ENCODE measurements at regions of chr1 and their contacts with region 1.

Region 1: DNA sequence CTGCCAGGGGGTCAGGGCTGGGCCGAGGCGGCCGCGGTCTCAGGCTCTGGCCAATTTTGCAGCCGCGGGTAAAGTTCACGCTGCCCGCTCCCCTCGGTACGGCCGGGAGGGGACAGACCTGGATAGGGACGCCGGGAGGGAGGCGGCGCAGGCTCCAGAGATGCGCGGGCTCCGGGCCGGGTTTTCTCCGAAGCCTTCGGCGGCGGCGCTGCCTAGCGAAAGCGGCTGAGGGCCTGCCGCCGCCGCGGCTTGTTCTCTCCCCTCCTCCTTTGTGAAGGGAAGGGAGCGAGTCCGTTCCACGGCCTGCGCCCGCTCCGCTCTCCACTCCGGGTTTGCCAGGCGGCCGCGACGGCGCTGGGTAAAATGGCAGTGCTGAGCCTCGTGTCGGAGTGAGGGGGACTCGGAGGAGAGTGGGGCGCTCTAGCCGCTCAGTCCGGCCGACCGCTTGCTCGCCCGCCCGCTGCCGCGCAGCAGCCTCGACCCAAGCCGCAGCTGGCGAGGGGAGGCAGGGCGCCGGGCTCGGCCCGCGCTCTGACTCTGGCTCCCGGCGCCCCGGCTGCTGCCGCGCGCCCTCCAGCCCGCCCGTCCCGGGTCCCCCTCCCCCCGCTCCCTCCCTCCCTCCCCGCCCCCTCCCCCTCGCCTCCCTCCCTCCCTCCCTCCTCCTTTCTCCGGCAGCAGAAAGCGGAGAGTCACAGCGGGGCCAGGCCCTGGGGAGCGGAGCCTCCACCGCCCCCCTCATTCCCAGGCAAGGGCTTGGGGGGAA is at the start of gene ARID1A:
- DNase-seq: peak; percentile 97 to 99
- ATAC-seq: peak; percentile 91
- H3K4me3 ChIP-seq: peak within 1 kb of the TSS; percentile 95 to 100
- H3K27ac ChIP-seq: peak within 1 kb of the TSS; percentile 91 to 93
- H3K4me1 ChIP-seq: peaks cover 2 to 8% of the 10 kb centered on the region in 2 donors
- H3K27me3 ChIP-seq: no peaks in the 10 kb centered on the region
- total RNA-seq, gene ARID1A: 55.9 to 72.3 TPM

Region 2: DNA sequence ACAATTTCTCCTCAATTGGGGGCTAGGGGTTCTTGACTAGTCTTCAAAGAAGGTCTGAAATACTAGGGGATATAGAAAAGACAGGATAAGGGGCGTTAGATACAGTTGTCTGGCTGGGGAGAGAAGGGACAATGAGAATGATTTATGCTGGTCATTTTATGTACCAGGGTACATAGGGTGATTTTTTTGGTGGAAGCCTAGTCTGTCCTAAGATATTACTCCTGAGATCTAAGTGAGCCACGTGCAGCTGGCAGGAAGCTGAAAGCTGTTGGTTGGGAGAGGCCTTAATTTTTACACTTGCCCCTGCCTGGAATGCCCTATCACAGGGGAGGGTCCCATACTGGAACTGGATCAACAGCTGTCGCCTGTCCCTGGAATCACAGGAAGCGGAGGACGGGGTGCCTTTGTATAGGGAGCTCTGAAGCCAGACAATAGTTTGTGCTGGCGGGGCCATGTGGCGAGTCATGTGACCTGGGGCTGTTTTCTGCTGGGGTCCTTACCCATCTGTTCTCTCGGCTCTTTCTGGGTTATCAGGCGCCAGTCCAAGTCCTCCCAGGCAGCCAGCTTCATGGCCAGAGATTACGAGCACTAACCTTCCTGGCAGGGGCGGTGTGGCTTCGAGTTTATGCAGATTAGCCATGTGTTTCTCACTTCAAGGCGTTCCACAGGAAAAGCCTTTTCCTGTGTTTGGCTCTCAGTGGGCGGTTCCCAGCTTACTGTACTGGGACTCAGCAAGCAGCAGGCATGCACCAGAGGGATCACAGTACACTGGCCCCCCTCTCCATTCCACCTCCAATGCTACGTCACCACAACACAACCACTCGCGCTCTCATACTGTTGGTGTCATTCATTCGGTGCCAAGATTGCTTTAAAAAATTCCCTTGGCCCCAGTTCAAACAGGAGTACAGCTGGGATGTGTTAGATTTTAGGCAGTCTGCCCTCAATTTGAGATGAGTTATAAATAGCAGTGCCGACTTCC is 27.8 kb after region 1 on chr1:
- intact Hi-C with region 1: loop called in 1 of 2 experiments (anchors 2 kb)
- DNase-seq: peak; percentile 89
- ATAC-seq: peak; percentile 91
- H3K4me3 ChIP-seq: no peak overlapping the region
- H3K27ac ChIP-seq: peak overlapping the region; percentile 4 to 37
- H3K4me1 ChIP-seq: peaks cover 5 to 30% of the 10 kb centered on the region in 2 donors
- H3K27me3 ChIP-seq: no peaks in the 10 kb centered on the region

Region 3: DNA sequence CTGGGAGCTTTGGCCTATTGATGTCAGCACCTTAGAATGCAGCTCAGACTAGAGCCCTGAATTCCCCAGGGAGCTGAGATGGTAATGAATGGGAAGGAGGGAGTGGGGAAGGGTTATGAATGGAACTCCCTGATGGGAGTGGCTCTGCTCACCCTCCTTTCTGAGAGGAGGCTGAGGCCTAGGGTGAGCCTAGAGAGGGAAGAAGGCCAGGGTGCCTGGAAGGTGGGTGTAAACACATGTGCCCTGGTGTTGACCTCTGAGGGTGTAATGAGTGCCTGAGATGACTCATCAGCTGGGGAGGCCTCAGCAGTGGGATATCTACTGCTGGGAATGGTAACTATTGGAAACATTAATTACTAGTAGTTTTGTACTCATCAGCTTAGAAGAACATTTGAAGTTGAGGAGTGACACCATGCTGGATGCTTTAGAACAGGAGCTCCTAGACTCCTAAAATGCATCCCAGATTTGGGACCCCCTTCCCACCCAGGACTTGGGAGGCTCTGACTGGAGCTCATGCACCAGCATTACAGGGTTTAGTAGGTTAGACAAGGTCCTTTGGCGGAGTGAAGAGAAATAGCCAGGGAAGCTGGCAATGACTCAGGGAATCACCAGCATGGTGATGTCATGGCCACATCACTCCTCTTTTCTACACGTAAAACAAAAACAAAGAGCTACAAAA is 76.2 kb after region 1 on chr1:
- intact Hi-C with region 1: loop called (anchors 5 kb)
- DNase-seq: peak in 1 of 2 donors; percentile 72
- ATAC-seq: peak; percentile 78
- H3K4me3 ChIP-seq: no peak overlapping the region
- H3K27ac ChIP-seq: peak overlapping the region in 1 of 2 donors; percentile 72
- H3K4me1 ChIP-seq: peaks cover 3 to 10% of the 10 kb centered on the region in 2 donors
- H3K27me3 ChIP-seq: no peaks in the 10 kb centered on the region

Region 4: DNA sequence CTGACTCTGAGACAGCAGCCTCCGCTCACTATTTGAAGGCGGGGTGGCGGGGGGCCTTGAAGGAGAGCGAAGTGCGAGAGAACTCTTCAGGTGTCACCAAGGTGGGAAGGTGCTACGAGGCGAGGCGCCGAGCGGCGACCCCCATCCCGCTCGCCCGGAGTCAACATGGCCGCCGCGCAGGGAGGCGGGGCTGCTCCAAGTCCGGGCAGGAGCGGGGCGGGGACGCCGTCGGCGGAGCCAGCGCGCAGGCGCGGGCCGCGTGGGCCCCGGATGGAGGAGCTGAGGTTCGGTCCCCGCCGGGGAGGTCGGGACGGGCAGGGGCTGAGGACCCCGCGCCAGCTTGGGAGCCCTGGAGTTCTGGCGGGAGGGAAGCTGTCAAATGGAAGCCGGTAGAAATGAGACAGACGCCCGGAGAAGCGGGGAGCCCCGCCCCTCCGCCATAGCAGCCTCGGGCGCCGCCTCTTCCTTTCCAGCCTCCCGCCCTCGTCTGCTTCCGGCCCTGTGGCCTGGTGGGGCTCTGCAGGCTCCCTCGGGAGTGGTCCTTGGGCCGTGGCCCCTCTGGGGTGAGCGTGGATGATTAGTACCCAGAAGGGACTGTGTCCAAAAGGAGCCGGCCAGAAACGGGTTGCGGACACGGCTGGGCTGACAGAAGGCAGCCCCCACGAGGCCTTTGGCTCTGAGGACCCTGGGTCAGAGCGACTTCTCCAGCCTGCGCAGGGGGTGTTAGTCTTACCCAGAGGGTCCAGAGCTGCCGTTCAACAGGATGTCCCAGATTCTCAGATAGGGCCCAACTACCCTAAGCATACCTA is 92.4 kb after region 1 on chr1 and contains the start of gene PIGV:
- intact Hi-C with region 1: loop called (anchors 1 to 2 kb)
- DNase-seq: peak; percentile 93 to 96
- ATAC-seq: peak; percentile 93
- H3K4me3 ChIP-seq: peak within 1 kb of the TSS; percentile 48 to 71
- H3K27ac ChIP-seq: peak within 1 kb of the TSS; percentile 91 to 100
- H3K4me1 ChIP-seq: peaks cover 0 to 2% of the 10 kb centered on the region in 2 donors
- H3K27me3 ChIP-seq: no peaks in the 10 kb centered on the region
- total RNA-seq, gene PIGV: 6.8 to 10.3 TPM

Measured in aorta (tissue), 5 donors.